Natural killer cell (primary cell): ENCODE measurements at regions of chr20 and their contacts with region 1.

Region 1: GRCh38 chr20:48329635-48330277 is 498.0 kb downstream of the PREX1 start:
- DNase-seq: peak in 1 of 2 donors; percentile 19
- ATAC-seq: no peak
- H3K4me3 ChIP-seq: no peak overlapping the region
- H3K4me3 Mint-ChIP-seq: no peak overlapping the region
- H3K27ac ChIP-seq: no peak overlapping the region
- H3K27ac Mint-ChIP-seq: no peak overlapping the region
- H3K4me1 ChIP-seq: no peaks in the 10 kb centered on the region
- H3K4me1 Mint-ChIP-seq: no peaks in the 10 kb centered on the region
- H3K27me3 ChIP-seq: no peaks in the 10 kb centered on the region
- H3K27me3 Mint-ChIP-seq: peaks cover 11 to 27% of the 10 kb centered on the region in 2 donors
- CTCF ChIP-seq: no peak

Region 2: GRCh38 chr20:47725248-47725973 is 604.3 kb before region 1 on chr20:
- intact Hi-C with region 1: loop called (anchors 10 kb)
- DNase-seq: peak; percentile 61 to 93
- ATAC-seq: peak; percentile 69 to 76 (median 74)
- H3K4me3 ChIP-seq: no peak overlapping the region
- H3K4me3 Mint-ChIP-seq: no peak overlapping the region
- H3K27ac ChIP-seq: no peak overlapping the region
- H3K27ac Mint-ChIP-seq: no peak overlapping the region
- H3K4me1 ChIP-seq: peaks cover 30% of the 10 kb centered on the region
- H3K4me1 Mint-ChIP-seq: peaks cover 25 to 32% of the 10 kb centered on the region in 2 donors
- H3K27me3 ChIP-seq: no peaks in the 10 kb centered on the region
- H3K27me3 Mint-ChIP-seq: no peaks in the 10 kb centered on the region
- CTCF ChIP-seq: peak; percentile 85